ENCODE measurements at regions of chr19 and their contacts with region 1.

Region 1: DNA sequence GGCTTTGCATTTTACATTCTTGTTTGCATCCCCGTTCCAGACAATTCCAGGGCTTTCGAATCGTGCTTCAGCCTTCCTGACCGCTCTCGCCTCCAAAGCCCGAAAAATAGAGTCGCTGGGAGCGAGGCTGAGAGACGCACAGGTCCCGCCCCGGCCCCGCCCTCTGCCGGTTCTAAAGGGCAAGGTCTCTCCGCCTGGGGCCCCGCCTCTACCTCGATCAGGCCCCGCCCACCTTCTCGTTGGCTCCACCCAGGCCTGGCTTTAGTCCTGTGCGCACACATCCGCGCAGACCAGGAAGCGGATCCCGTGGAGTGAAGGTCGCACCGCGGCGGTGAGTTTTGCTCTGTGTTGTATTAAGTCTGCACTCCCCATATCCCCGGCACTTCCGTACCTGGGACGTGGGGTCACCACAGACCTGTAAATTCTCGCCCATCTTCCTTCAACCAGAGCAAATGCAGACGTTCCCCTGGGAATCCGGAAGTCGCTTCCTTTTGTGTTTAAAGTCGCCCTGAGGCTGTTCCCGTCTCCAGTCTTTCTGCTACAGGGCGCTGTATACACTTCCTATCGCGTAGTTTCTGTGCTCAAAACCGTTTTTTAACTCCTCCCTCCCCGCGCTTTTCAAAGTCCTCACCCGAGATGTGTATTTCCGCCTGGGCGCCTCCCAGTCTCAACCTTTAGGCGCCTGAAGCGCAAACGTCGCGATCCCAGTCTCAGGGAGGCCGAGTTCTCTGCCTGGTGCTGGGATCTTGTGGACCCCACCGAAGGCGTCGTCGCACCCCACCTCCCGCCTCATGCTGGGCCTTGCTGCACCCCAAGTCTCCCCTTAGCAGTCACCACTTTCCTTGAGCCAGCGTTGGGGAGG is at the start of gene ZNF701:
- DNase-seq: peak; percentile 98
- H3K4me3 ChIP-seq: peak within 1 kb of the TSS; percentile 57 to 84 (median 64)
- H3K27ac ChIP-seq: peak within 1 kb of the TSS; percentile 83 to 87 (median 85)
- H3K4me1 ChIP-seq: peaks cover 0 to 21% (median 13%) of the 10 kb centered on the region in 4 donors
- H3K27me3 ChIP-seq: no peaks in the 10 kb centered on the region
- CTCF ChIP-seq: peak; percentile 13 to 37 (median 24)
- EP300 ChIP-seq: no peak
- POLR2A ChIP-seq: peak; percentile 88 to 90
- total RNA-seq, gene ZNF701: 12.4 to 22.4 (median 14.8) TPM

Region 2: GRCh38 chr19:52601025-52601973 is 31.1 kb after region 1 on chr19:
- intact Hi-C with region 1: loop called (anchors 2 kb)
- DNase-seq: peak; percentile 97
- H3K4me3 ChIP-seq: peak overlapping the region; percentile 48 to 66 (median 56)
- H3K27ac ChIP-seq: peak overlapping the region; percentile 70 to 87 (median 76)
- H3K4me1 ChIP-seq: peaks cover 0 to 17% (median 14%) of the 10 kb centered on the region in 4 donors
- H3K27me3 ChIP-seq: no peaks in the 10 kb centered on the region
- CTCF ChIP-seq: peak in 2 of 4 experiments; percentile 27 to 46
- EP300 ChIP-seq: no peak
- POLR2A ChIP-seq: peak in 1 of 2 donors; percentile 28